B cell (primary cell): ENCODE measurements at regions of chr6 and their contacts with region 1.

Region 1: GRCh38 chr6:150600301-150601017 is 774 bp downstream of the PLEKHG1 start:
- DNase-seq: peak; percentile 95
- ATAC-seq: peak; percentile 75
- H3K4me3 ChIP-seq: peak overlapping the region; percentile 56 to 83 (median 73)
- H3K4me3 Mint-ChIP-seq: peak overlapping the region; percentile 99
- H3K27ac ChIP-seq: peak overlapping the region; percentile 97 to 99
- H3K27ac Mint-ChIP-seq: peak overlapping the region; percentile 99
- H3K4me1 ChIP-seq: peaks cover 52 to 54% of the 10 kb centered on the region in 2 donors
- H3K4me1 Mint-ChIP-seq: peaks cover 65% of the 10 kb centered on the region
- H3K27me3 ChIP-seq: no peaks in the 10 kb centered on the region
- H3K27me3 Mint-ChIP-seq: no peaks in the 10 kb centered on the region
- CTCF ChIP-seq: peak; percentile 76

Region 2: DNA sequence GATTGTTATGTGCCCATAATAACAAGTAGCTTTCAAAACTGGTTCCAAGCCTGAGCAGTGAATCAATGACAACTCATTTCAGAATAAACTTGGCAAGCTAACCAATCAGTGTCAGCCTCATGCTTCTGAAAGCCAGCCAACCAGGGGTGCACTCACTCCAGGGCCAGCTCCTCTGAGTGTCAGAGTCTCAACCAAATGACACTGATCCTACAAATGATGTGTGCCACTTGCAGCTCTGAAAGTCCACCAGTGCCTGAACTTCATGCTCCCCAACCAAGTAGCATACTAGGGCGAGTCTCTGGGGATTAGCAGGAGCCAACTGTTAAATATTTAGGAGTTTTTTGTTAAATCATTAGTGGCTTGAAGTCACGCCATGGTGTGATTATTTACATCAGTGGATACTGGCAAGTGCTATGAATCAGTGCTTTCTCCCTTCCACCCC is 227.2 kb before region 1 on chr6:
- CTCF ChIA-PET with region 1: no interaction called
- POLR2A ChIA-PET with region 1: no interaction called
- intact Hi-C with region 1: no loop called
- DNase-seq: no peak
- ATAC-seq: no peak
- H3K4me3 ChIP-seq: no peak overlapping the region
- H3K4me3 Mint-ChIP-seq: no peak overlapping the region
- H3K27ac ChIP-seq: no peak overlapping the region
- H3K27ac Mint-ChIP-seq: no peak overlapping the region
- H3K4me1 ChIP-seq: no peaks in the 10 kb centered on the region
- H3K4me1 Mint-ChIP-seq: no peaks in the 10 kb centered on the region
- H3K27me3 ChIP-seq: peaks cover 0 to 29% (median 6%) of the 10 kb centered on the region in 4 experiments
- H3K27me3 Mint-ChIP-seq: peaks cover 33% of the 10 kb centered on the region
- CTCF ChIP-seq: no peak

Region 3: GRCh38 chr6:150537893-150538292 is 62.6 kb before region 1 on chr6:
- CTCF ChIA-PET with region 1: no interaction called
- POLR2A ChIA-PET with region 1: no interaction called
- intact Hi-C with region 1: loop called (anchors 5 kb)
- DNase-seq: no peak
- ATAC-seq: no peak
- H3K4me3 ChIP-seq: no peak overlapping the region
- H3K4me3 Mint-ChIP-seq: no peak overlapping the region
- H3K27ac ChIP-seq: no peak overlapping the region
- H3K27ac Mint-ChIP-seq: no peak overlapping the region
- H3K4me1 ChIP-seq: no peaks in the 10 kb centered on the region
- H3K4me1 Mint-ChIP-seq: no peaks in the 10 kb centered on the region
- H3K27me3 ChIP-seq: peaks cover 0 to 11% (median 3%) of the 10 kb centered on the region in 4 experiments
- H3K27me3 Mint-ChIP-seq: peaks cover 17% of the 10 kb centered on the region
- CTCF ChIP-seq: no peak

Region 4: GRCh38 chr6:150622941-150623874 is 22.7 kb after region 1 on chr6:
- CTCF ChIA-PET with region 1: interaction called, 31 read pairs
- POLR2A ChIA-PET with region 1: interaction called, 32 read pairs
- intact Hi-C with region 1: loop called (anchors 1 kb)
- DNase-seq: peak; percentile 95
- ATAC-seq: peak; percentile 85
- H3K4me3 ChIP-seq: peak overlapping the region in 2 of 5 experiments; percentile 18 to 37
- H3K4me3 Mint-ChIP-seq: peak overlapping the region; percentile 9
- H3K27ac ChIP-seq: peak overlapping the region; percentile 96
- H3K27ac Mint-ChIP-seq: peak overlapping the region; percentile 94
- H3K4me1 ChIP-seq: peaks cover 93 to 94% of the 10 kb centered on the region in 2 donors
- H3K4me1 Mint-ChIP-seq: peaks cover 90% of the 10 kb centered on the region
- H3K27me3 ChIP-seq: no peaks in the 10 kb centered on the region
- H3K27me3 Mint-ChIP-seq: no peaks in the 10 kb centered on the region
- CTCF ChIP-seq: no peak

Region 5: DNA sequence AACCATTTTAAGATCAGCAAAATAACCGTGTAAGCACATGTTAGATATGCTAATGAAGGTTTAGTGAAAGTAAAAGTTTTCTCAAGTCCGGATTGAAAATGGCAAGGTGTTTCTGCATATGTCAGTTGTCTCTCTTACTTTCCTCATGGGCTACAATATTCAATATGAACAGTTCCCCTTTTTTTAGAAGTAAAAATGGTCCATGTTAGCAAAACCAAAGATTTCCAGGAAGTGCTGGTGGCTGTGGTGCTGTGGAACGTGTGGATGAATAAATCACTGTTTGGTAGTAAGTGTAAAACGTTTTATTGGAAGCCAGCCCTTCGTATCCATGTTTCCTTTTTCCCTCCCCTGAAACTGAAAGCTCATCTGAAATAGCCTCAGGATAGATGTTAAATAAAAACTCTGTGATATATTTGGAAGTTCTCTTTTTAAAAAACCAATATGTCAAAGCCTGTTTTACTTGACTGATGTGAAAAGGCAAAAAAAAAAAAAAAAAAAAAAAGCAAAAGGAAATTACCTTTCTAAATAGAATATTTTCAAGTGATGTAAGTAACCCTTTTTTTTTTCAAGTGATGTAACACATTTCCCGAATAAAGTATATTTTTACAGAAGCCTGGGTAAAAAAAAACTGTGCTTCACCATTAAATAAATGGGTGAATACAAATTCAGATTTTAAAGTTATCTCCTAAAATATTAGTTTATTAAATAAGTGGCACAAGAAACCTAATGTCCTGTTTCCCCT is 41.1 kb after region 1 on chr6:
- CTCF ChIA-PET with region 1: interaction called, 77 read pairs
- POLR2A ChIA-PET with region 1: interaction called, 84 read pairs
- intact Hi-C with region 1: loop called (anchors 1 kb)
- DNase-seq: peak; percentile 86
- ATAC-seq: peak; percentile 68
- H3K4me3 ChIP-seq: peak overlapping the region; percentile 11 to 58 (median 41)
- H3K4me3 Mint-ChIP-seq: peak overlapping the region; percentile 90
- H3K27ac ChIP-seq: peak overlapping the region; percentile 72 to 90
- H3K27ac Mint-ChIP-seq: peak overlapping the region; percentile 90
- H3K4me1 ChIP-seq: peaks cover 54 to 80% of the 10 kb centered on the region in 2 donors
- H3K4me1 Mint-ChIP-seq: peaks cover 86% of the 10 kb centered on the region
- H3K27me3 ChIP-seq: no peaks in the 10 kb centered on the region
- H3K27me3 Mint-ChIP-seq: no peaks in the 10 kb centered on the region
- CTCF ChIP-seq: no peak

Region 6: DNA sequence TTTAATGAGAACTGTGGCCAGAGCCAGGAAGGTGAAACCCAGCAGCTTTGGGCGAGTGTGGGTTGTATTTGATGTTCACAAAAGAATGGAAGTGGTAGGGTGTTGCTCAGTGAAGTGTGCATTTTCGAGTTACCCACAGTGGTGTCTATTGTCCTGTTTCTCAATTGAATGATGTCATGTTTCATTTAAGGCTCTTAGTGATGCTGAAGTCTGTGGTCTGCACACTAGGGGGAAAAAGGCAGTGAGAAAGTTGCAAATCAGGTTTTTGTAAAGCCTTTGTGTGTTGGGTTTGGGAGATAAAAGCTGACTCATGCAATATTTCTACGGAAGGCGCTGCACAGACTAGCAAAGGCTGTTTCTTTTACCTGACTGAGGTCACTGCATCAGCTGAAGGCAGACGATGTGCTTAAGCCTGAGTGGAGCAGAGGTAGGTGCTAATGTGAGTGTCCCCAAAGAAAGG is 120.3 kb after region 1 on chr6:
- CTCF ChIA-PET with region 1: interaction called, 3 read pairs
- POLR2A ChIA-PET with region 1: interaction called, 3 read pairs
- intact Hi-C with region 1: loop called (anchors 5 kb)
- DNase-seq: peak; percentile 77
- ATAC-seq: peak; percentile 93
- H3K4me3 ChIP-seq: no peak overlapping the region
- H3K4me3 Mint-ChIP-seq: peak overlapping the region; percentile 40
- H3K27ac ChIP-seq: peak overlapping the region in 1 of 2 donors; percentile 56
- H3K27ac Mint-ChIP-seq: peak overlapping the region; percentile 54
- H3K4me1 ChIP-seq: peaks cover 43 to 53% of the 10 kb centered on the region in 2 donors
- H3K4me1 Mint-ChIP-seq: peaks cover 75% of the 10 kb centered on the region
- H3K27me3 ChIP-seq: no peaks in the 10 kb centered on the region
- H3K27me3 Mint-ChIP-seq: no peaks in the 10 kb centered on the region
- CTCF ChIP-seq: peak; percentile 52

Region 7: DNA sequence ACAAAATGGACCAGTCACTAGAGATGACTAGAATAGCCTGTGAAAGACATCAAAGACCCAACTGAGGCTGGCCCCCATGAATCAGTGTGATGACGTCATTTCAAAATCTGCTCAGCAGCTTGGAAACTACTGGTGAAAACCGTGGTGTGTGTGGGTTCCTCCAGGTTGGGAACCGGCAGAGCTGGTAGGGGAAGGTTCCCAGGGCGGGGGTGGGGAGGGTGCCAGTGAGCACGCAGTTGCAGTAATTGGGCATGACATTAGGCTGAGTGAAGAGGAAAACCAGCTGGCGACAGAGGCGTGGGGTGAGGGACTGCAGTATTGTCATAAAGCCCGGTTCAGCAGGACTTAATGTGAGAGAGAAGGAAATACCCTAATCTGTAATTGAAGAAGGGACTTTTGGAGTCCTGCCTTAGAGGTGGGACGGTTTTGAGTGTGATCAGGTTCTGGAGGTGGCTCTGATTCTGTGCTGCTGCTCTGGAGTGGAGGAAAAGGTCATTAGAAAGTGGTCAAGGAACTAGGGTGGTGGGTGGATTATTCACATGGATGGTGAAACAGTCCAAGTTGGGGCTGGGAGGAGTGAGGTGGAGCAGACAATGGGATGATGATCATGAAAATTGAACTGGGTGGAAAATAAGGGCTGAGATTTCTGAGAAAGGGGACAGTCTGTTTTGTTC is 213.0 kb after region 1 on chr6:
- CTCF ChIA-PET with region 1: interaction called, 21 read pairs
- POLR2A ChIA-PET with region 1: no interaction called
- intact Hi-C with region 1: loop called (anchors 1 kb)
- DNase-seq: peak; percentile 65
- ATAC-seq: peak; percentile 55
- H3K4me3 ChIP-seq: no peak overlapping the region
- H3K4me3 Mint-ChIP-seq: peak overlapping the region; percentile 73
- H3K27ac ChIP-seq: peak overlapping the region; percentile 45 to 85
- H3K27ac Mint-ChIP-seq: peak overlapping the region; percentile 95
- H3K4me1 ChIP-seq: peaks cover 0 to 9% of the 10 kb centered on the region in 2 donors
- H3K4me1 Mint-ChIP-seq: peaks cover 34% of the 10 kb centered on the region
- H3K27me3 ChIP-seq: no peaks in the 10 kb centered on the region
- H3K27me3 Mint-ChIP-seq: no peaks in the 10 kb centered on the region
- CTCF ChIP-seq: no peak

Region 8: DNA sequence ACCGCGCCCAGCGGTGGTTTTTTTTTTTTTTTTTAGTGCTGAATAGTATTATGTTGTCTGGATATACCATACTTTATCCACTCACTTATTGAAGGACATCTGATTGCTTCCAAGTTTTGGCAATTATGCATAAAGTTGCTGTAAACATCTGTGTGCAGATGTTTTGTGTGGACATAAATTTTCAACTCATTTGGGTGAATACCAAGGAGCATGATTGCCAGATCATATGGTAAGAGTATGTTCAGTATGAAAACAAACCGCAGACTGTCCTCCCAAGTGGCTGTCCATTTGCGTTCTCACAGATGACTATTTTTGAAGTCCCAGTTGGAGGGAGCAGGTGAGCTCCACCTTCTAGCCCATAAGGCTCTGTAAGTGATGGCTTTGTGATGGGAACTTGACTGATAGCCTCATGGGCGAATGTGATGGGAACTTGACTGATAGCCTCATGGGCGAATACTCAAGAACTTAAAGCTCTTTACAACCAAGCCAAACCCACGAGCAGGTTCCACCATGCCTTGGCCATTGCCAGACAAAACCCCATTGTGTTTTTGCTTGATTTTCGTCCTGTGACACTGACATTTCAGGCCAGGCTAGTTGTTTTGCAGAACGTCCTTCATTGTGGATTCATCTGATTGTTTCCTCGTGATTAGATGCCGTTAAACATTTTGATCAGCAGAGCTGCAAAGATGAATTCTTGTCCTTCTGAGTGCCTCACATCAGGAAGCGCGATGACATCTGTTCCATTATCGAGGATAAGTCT is 739.9 kb after region 1 on chr6:
- CTCF ChIA-PET with region 1: no interaction called
- POLR2A ChIA-PET with region 1: no interaction called
- intact Hi-C with region 1: no loop called
- DNase-seq: no peak
- ATAC-seq: no peak
- H3K4me3 ChIP-seq: no peak overlapping the region
- H3K4me3 Mint-ChIP-seq: no peak overlapping the region
- H3K27ac ChIP-seq: no peak overlapping the region
- H3K27ac Mint-ChIP-seq: no peak overlapping the region
- H3K4me1 ChIP-seq: no peaks in the 10 kb centered on the region
- H3K4me1 Mint-ChIP-seq: no peaks in the 10 kb centered on the region
- H3K27me3 ChIP-seq: peaks cover 0 to 2% (median 0%) of the 10 kb centered on the region in 4 experiments
- H3K27me3 Mint-ChIP-seq: peaks cover 16% of the 10 kb centered on the region
- CTCF ChIP-seq: no peak